Mammary epithelial cell (primary cell): ENCODE measurements at regions of chr17 and their contacts with region 1.

Region 1: DNA sequence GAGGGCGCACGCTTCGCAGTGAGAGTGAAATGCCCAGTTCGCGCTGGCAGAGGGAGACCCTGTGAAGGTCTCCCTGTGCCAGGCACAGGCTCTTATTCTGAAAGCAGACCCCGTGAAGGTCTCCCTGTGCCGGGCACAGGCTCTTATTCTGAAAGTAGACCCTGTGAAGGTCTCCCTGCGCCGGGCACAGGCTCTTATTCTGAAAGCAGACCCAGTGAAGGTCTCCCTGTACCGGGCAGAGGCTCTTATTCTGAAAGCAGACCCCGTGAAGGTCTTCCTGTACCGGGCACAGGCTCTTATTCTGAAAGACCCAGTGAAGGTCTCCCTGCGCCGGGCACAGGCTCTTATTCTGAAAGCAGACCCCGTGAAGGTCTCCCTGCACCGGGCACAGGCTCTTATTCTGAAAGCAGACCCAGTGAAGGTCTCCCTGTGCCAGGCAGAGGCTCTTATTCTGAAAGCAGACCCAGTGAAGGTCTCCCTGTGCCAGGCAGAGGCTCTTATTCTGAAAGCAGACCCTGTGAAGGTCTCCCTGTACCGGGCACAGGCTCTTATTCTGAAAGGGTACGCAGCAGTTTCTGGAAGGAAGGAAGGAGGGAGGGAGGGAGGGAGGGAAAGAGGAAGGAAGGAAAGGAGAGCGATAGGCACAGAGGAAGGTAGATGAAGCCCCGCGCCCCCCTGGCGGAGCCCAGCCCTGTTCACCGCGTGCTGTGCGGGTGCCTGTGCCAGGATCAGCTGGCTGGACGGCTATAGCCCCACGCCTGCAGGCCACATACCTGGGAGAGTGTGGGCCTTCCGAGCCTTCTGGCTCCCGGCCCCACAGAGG is 55.3 kb downstream of the WDR45B start:
- DNase-seq: peak; percentile 68
- H3K4me3 ChIP-seq: peak overlapping the region; percentile 57 to 64 (median 63)
- H3K27ac ChIP-seq: peak overlapping the region; percentile 11
- H3K4me1 ChIP-seq: peaks cover 16% of the 10 kb centered on the region
- H3K27me3 ChIP-seq: no peaks in the 10 kb centered on the region
- CTCF ChIP-seq: no peak

Region 2: DNA sequence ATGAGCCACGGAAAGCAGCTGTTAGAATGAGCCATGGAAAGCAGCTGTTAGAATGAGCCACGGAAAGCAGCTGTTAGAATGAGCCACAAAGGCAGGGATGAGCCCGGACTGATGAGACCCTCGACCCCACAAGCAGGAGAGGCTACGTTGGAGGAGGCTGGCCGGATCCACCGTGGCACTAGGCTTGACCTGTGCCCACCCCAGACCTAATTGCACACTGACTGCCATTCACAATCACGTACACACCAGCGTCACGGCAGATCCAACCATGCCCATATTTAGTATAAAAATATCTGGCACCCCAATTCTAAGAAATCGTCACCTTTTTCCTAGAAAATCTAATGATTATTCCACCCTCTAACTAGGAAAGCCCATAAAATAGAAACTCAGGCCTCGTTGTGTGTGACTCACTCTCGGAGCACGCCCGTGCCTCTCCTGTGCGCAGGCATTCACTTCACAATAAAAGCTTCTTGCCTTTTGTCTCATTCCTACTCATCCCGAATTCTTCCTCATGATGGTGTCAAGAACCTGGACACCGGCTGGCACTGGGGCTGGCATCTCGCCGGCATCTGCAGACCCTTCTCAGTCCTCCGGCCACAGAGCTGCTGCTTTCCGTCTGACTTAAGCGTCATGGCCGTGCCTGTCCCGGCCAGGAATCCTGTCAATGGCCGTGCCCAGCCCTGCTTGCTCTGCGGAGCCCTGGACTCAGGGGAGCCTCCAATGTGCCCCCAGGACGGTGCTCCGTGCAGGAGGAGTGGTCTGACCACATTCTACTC is 253.9 kb before region 1 on chr17:
- CTCF ChIA-PET with region 1: no interaction called
- dilution Hi-C with region 1: no loop called
- in situ Hi-C with region 1: no loop called
- intact Hi-C with region 1: loop called (anchors 1 kb)
- DNase-seq: peak; percentile 82
- H3K4me3 ChIP-seq: peak overlapping the region; percentile 6 to 39 (median 34)
- H3K27ac ChIP-seq: peak overlapping the region; percentile 62
- H3K4me1 ChIP-seq: peaks cover 25% of the 10 kb centered on the region
- H3K27me3 ChIP-seq: no peaks in the 10 kb centered on the region
- CTCF ChIP-seq: no peak

Region 3: DNA sequence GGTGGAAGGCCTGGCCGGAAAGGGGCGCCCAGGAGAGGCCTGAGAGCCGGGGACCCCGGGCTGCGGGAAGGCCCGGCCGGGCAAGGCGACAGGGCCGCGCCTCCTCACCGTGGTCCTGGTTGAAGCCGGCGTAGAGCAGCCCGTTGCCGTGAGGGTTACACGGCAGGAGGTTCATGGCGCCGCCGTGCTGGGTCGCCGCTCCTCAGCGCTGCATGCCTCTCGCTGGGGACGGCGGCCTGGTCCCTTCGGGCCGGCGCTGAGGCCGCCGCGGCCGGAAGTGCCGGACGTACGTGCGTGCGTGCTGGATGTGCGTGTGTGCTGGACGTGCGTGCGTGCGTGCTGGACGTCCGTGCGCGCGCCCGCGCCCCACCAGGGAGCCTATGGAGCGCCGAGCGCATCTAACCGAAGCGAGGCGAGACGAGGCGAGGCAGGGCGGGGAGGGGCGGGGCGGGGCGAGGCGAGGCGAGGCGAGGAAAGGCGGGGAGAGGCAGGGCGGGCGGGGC is 55.2 kb after region 1 on chr17 and contains the start of gene WDR45B:
- CTCF ChIA-PET with region 1: no interaction called
- dilution Hi-C with region 1: no loop called
- in situ Hi-C with region 1: no loop called
- intact Hi-C with region 1: loop called (anchors 2 kb)
- DNase-seq: peak; percentile 97
- H3K4me3 ChIP-seq: peak within 1 kb of the TSS; percentile 92 to 99 (median 98)
- H3K27ac ChIP-seq: peak within 1 kb of the TSS; percentile 91
- H3K4me1 ChIP-seq: peaks cover 18% of the 10 kb centered on the region
- H3K27me3 ChIP-seq: no peaks in the 10 kb centered on the region
- CTCF ChIP-seq: no peak
- total RNA-seq, gene WDR45B: 62.2 to 68.4 TPM